ENCODE measurements at regions of chr15 and their contacts with region 1.

Region 1: GRCh38 chr15:100806157-100806556 is 73.5 kb upstream of the ALDH1A3 start:
- DNase-seq: no peak
- H3K4me3 ChIP-seq: no peak overlapping the region
- H3K27ac ChIP-seq: no peak overlapping the region
- H3K4me1 ChIP-seq: no peaks in the 10 kb centered on the region
- CTCF ChIP-seq: no peak

Region 2: GRCh38 chr15:100818927-100819326 is 12.8 kb after region 1 on chr15:
- CTCF ChIA-PET with region 1: no interaction called
- POLR2A ChIA-PET with region 1: no interaction called
- intact Hi-C with region 1: loop called (anchors 1 kb)
- DNase-seq: no peak
- H3K4me3 ChIP-seq: no peak overlapping the region
- H3K27ac ChIP-seq: no peak overlapping the region
- H3K4me1 ChIP-seq: no peaks in the 10 kb centered on the region
- CTCF ChIP-seq: no peak

Measured in OCI-LY7 (cell line).